Spleen (tissue), 13 donors: ENCODE measurements at regions of chr15 and their contacts with region 1.

Region 1: DNA sequence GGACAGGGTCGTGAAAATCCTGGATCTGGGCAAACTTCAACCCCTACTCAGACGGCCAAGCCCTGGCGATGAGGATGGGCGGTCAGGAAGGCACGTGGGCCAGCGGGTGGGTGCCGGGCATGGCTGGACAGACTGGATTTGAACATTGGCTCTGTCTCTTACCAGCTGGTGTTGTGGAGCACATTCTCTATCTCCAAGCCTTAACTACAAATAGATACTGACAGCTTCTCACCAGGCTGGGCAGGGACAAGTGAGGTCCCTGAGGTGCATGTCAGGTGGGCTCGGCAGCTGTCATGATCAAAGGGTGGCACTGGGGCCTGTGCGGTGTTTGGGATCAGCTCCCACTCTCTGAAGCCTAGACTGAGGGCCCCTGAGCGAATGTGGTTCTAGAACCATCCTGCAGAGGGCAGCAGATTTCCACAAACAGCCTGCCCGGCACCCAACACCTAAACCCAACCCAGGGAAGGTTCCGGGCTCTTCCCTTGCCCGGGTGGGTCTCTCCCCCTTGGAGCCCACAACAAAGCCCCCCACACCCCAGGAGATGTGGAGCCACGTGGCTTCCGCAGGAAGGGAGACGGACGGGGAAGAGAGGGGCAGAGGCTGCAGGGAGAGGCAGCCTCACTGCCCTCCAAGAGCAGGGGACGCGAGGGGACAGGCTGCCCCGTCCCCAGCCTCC is 58.4 kb downstream of the RGMA start:
- DNase-seq: peak; percentile 87
- H3K4me3 ChIP-seq: no peak overlapping the region
- H3K27ac ChIP-seq: peak overlapping the region in 6 of 8 donors; percentile 80 to 95 (median 88)
- H3K4me1 ChIP-seq: peaks cover 6 to 58% (median 45%) of the 10 kb centered on the region in 6 donors
- H3K27me3 ChIP-seq: peaks cover 0 to 4% (median 0%) of the 10 kb centered on the region in 7 donors
- CTCF ChIP-seq: peak; percentile 62 to 95 (median 88)
- POLR2A ChIP-seq: no peak

Region 2: GRCh38 chr15:92899948-92900708 is 130.4 kb before region 1 on chr15 and contains the start of gene CHD2:
- intact Hi-C with region 1: no loop called
- DNase-seq: peak; percentile 87
- H3K4me3 ChIP-seq: peak within 1 kb of the TSS; percentile 58 to 83 (median 62)
- H3K27ac ChIP-seq: peak within 1 kb of the TSS; percentile 95 to 99 (median 98)
- H3K4me1 ChIP-seq: peaks cover 27 to 85% (median 70%) of the 10 kb centered on the region in 6 donors
- H3K27me3 ChIP-seq: no peaks in the 10 kb centered on the region
- CTCF ChIP-seq: peak in 1 of 11 experiments; percentile 18
- POLR2A ChIP-seq: peak; percentile 79 to 98 (median 95)
- total RNA-seq, gene CHD2: 160 to 232 (median 204) TPM

Region 3: DNA sequence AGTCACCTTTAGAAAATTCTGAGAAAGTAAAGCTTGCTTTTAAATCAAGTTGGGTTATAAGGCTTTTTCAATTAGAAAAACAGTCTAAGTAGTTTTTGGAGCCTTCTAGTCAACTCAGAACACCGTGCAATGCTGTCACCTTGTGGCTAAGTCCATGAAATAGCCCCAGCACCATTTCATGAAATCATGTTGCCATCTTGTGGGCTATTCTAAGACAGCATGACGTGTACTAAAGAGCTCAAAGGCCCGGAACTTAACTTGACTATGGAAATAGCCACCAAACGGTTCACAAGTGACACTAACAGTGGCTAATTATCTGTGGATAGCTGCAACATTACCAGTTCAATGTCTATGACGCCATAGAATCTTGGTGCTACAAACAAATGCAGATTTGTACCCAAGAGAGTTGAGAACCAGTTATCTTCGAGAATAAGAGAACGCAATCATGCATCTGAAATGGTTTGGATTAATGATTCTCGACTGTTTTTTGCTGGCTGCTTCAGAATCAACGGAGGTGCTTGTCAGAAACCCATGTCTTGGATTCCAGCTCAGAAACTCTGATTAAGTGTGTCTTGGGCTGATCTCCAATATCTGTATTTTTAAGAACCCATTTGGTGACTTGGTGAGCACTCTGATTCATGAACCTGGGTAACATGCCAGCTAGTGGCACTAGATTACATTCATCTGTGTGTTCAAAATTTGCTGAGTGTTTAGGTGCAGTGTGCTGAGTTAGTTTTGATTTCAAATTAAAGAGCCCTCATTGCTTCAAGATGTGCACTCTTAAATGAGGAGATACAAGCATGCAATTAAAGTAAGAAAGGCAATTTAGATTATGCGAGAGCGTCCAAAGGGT is 1089.6 kb after region 1 on chr15:
- intact Hi-C with region 1: loop called (anchors 10 kb)
- DNase-seq: no peak
- H3K4me3 ChIP-seq: no peak overlapping the region
- H3K27ac ChIP-seq: no peak overlapping the region
- H3K4me1 ChIP-seq: peaks cover 0 to 4% (median 0%) of the 10 kb centered on the region in 6 donors
- H3K27me3 ChIP-seq: no peaks in the 10 kb centered on the region
- CTCF ChIP-seq: peak; percentile 40 to 85 (median 73)
- POLR2A ChIP-seq: no peak